ENCODE measurements at regions of chr11 and their contacts with region 1.

Region 1: GRCh38 chr11:83682611-83682973 is 396.4 kb upstream of the CCDC90B start:
- DNase-seq: peak; percentile 44 to 51
- H3K4me3 ChIP-seq: no peak overlapping the region
- H3K4me3 Mint-ChIP-seq: no peak overlapping the region
- H3K27ac Mint-ChIP-seq: no peak overlapping the region
- H3K4me1 ChIP-seq: peaks cover 51% of the 10 kb centered on the region
- H3K4me1 Mint-ChIP-seq: peaks cover 33% of the 10 kb centered on the region
- H3K27me3 ChIP-seq: no peaks in the 10 kb centered on the region
- H3K27me3 Mint-ChIP-seq: no peaks in the 10 kb centered on the region
- CTCF ChIP-seq: no peak

Region 2: GRCh38 chr11:83648610-83649527 is 33.7 kb before region 1 on chr11:
- CTCF ChIA-PET with region 1: no interaction called
- POLR2A ChIA-PET with region 1: interaction called, 5 read pairs
- intact Hi-C with region 1: loop called (anchors 1 kb)
- DNase-seq: peak in 1 of 2 experiments; percentile 65
- H3K4me3 ChIP-seq: no peak overlapping the region
- H3K4me3 Mint-ChIP-seq: peak overlapping the region; percentile 20
- H3K27ac Mint-ChIP-seq: peak overlapping the region; percentile 65
- H3K4me1 ChIP-seq: peaks cover 31% of the 10 kb centered on the region
- H3K4me1 Mint-ChIP-seq: peaks cover 18% of the 10 kb centered on the region
- H3K27me3 ChIP-seq: no peaks in the 10 kb centered on the region
- H3K27me3 Mint-ChIP-seq: no peaks in the 10 kb centered on the region
- CTCF ChIP-seq: no peak

Region 3: GRCh38 chr11:83793332-83793731 is 110.7 kb after region 1 on chr11:
- CTCF ChIA-PET with region 1: no interaction called
- POLR2A ChIA-PET with region 1: no interaction called
- intact Hi-C with region 1: no loop called
- DNase-seq: no peak
- H3K4me3 ChIP-seq: no peak overlapping the region
- H3K4me3 Mint-ChIP-seq: no peak overlapping the region
- H3K27ac Mint-ChIP-seq: no peak overlapping the region
- H3K4me1 ChIP-seq: no peaks in the 10 kb centered on the region
- H3K4me1 Mint-ChIP-seq: no peaks in the 10 kb centered on the region
- H3K27me3 ChIP-seq: no peaks in the 10 kb centered on the region
- H3K27me3 Mint-ChIP-seq: peaks cover 10% of the 10 kb centered on the region
- CTCF ChIP-seq: no peak